ENCODE measurements at regions of chr18 and their contacts with region 1.

Region 1: GRCh38 chr18:48777026-48777743 is 173.6 kb downstream of the SMAD7 start:
- DNase-seq: peak; percentile 62 to 84 (median 69)
- ATAC-seq: peak in 1 of 4 donors; percentile 15
- H3K4me3 ChIP-seq: no peak overlapping the region
- H3K27ac ChIP-seq: peak overlapping the region in 3 of 12 donors; percentile 17 to 42 (median 39)
- H3K4me1 ChIP-seq: peaks cover 16 to 89% (median 66%) of the 10 kb centered on the region in 12 donors
- H3K27me3 ChIP-seq: no peaks in the 10 kb centered on the region
- CTCF ChIP-seq: peak; percentile 78 to 96 (median 88)
- POLR2A ChIP-seq: no peak

Region 2: DNA sequence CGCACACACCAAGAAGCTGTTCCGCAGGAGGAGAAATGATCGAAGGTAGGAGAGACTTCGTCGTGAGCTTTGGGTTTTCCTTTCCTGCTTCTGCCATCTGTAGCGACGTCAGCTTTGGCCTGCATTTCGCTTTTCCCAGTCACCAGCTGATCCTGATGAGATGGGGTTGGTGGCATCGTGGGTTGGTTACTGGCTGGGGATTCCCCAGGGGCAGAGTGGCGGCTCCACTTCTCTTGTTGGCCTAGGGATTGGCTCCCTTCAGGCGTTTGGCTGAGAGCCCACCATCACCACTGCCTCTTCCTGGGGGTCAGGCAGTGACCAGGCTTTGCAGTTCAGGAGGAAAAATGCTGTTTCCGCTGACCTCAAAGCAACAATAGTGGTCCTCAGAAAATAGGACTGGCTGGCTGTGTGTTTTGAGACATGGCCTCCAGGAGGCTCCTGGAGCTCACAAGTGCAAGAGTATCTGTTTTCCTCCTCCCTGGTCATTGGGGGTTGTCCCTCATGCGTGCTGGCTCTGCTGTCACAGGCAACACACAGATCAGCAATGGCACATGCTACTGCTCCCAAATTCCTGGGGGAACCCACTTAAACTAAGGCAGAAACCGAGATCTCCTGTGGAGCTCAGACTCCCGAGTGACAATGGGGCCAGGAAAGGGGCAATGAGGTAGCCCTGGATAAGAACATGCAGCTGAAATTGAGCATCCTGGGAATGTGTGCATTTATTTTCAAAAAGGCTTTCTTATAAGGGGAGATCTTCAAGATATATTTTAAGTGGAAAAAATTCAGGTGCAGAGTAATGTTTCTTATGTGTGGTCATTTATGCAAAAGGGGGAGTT is 65.3 kb before region 1 on chr18:
- intact Hi-C with region 1: loop called in 4 of 10 experiments (anchors 2 to 5 kb)
- DNase-seq: peak; percentile 44 to 67 (median 59)
- ATAC-seq: peak in 3 of 4 donors; percentile 53 to 61 (median 60)
- H3K4me3 ChIP-seq: no peak overlapping the region
- H3K27ac ChIP-seq: peak overlapping the region in 7 of 12 donors; percentile 16 to 93 (median 64)
- H3K4me1 ChIP-seq: peaks cover 2 to 86% (median 49%) of the 10 kb centered on the region in 12 donors
- H3K27me3 ChIP-seq: no peaks in the 10 kb centered on the region
- CTCF ChIP-seq: peak; percentile 30 to 75 (median 60)
- POLR2A ChIP-seq: no peak

Region 3: GRCh38 chr18:48842259-48843061 is 65.3 kb after region 1 on chr18:
- intact Hi-C with region 1: loop called in 1 of 10 experiments (anchors 10 kb)
- DNase-seq: peak in 4 of 5 donors; percentile 50 to 66 (median 59)
- ATAC-seq: peak; percentile 43 to 80 (median 62)
- H3K4me3 ChIP-seq: no peak overlapping the region
- H3K27ac ChIP-seq: peak overlapping the region; percentile 49 to 98 (median 84)
- H3K4me1 ChIP-seq: peaks cover 6 to 73% (median 53%) of the 10 kb centered on the region in 12 donors
- H3K27me3 ChIP-seq: no peaks in the 10 kb centered on the region
- CTCF ChIP-seq: no peak
- POLR2A ChIP-seq: no peak

Region 4: DNA sequence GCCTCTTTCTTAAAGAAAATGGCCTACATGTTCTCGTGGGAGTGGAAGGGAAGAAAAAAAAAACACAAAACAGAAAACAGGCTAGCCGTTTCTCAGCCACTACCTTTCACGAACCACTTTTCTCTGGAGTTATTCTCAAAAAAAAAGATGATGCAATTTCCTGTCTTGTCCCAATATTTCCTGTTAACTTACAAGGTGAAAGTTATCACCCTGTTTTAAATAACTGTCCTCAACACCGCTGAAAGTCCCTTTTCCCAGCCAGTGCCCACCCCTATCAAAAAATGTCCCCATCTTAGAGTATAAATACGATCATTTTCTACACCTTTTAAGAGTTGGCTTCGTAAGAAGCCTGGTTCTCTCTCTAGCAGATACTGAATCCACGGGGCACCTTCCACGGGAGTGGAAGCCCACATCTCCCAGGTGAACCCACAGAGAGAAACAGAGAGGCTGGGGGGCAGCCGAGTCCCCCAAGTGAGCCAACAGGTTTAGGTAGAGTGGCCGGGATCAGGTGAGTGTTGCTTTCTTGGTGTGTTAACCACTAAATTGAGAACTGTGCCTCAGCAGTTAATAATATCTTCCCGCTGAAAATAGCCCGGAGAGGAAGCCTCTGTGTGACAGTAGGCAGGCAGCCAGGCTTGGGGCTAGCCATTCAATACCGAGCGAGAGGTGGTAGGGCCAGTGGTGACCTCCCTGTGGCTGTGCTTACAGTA is 157.7 kb after region 1 on chr18:
- intact Hi-C with region 1: loop called in 4 of 10 experiments (anchors 5 kb)
- DNase-seq: peak; percentile 84 to 91 (median 86)
- ATAC-seq: peak; percentile 75 to 85 (median 80)
- H3K4me3 ChIP-seq: peak overlapping the region in 10 of 12 donors; percentile 11 to 48 (median 34)
- H3K27ac ChIP-seq: peak overlapping the region; percentile 17 to 96 (median 86)
- H3K4me1 ChIP-seq: peaks cover 34 to 98% (median 93%) of the 10 kb centered on the region in 12 donors
- H3K27me3 ChIP-seq: no peaks in the 10 kb centered on the region
- CTCF ChIP-seq: no peak
- POLR2A ChIP-seq: no peak

Region 5: GRCh38 chr18:49041435-49042245 is 264.5 kb after region 1 on chr18:
- intact Hi-C with region 1: loop called in 8 of 10 experiments (anchors 2 to 10 kb)
- DNase-seq: peak in 4 of 5 donors; percentile 40 to 64 (median 52)
- ATAC-seq: peak; percentile 58 to 81 (median 72)
- H3K4me3 ChIP-seq: no peak overlapping the region
- H3K27ac ChIP-seq: no peak overlapping the region
- H3K4me1 ChIP-seq: peaks cover 0 to 11% (median 0%) of the 10 kb centered on the region in 12 donors
- H3K27me3 ChIP-seq: no peaks in the 10 kb centered on the region
- CTCF ChIP-seq: peak; percentile 45 to 70 (median 61)
- POLR2A ChIP-seq: no peak

Region 6: GRCh38 chr18:49412679-49413078 is 635.5 kb after region 1 on chr18:
- intact Hi-C with region 1: loop called in 1 of 10 experiments (anchors 10 kb)
- DNase-seq: no peak
- ATAC-seq: no peak
- H3K4me3 ChIP-seq: no peak overlapping the region
- H3K27ac ChIP-seq: peak overlapping the region in 3 of 12 donors; percentile 5 to 40 (median 22)
- H3K4me1 ChIP-seq: peaks cover 0 to 16% (median 1%) of the 10 kb centered on the region in 12 donors
- H3K27me3 ChIP-seq: no peaks in the 10 kb centered on the region
- CTCF ChIP-seq: no peak
- POLR2A ChIP-seq: no peak